HEK293 (cell line): ENCODE measurements at regions of chr2 and their contacts with region 1.

Region 1: DNA sequence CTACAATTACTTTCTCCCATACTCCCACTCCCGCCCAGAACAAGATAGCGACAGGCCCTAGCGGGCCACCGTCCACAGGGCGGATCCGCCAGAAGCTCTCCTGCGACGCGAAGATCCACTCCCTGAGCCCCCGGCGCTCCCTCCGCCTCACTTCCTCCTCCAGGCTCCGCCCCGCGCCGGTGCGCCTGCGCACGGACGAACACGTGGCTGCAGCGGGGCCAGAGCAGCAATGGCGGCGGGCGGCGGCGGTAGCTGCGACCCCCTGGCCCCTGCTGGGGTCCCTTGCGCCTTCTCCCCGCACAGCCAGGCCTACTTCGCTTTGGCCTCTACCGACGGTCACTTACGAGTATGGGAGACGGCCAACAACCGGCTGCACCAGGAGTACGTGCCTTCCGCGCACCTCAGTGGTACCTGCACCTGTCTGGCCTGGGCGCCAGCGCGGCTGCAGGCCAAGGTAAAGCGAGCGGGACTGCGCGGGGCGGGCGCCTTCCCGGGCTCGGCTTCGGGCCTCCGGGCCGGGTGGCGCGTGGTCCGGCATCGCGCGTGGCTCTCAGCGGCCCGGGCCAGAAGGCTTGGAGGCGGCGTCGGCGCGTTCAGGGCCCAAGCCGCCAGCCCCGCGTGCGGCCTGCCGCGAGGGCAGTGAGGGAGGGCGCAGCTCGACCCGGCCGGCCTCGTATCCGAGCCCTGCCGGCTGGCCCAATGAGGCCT is at the start of gene WDR43:
- H3K4me3 ChIP-seq: peak within 1 kb of the TSS; percentile 95
- H3K27ac ChIP-seq: peak within 1 kb of the TSS; percentile 92
- H3K4me1 ChIP-seq: peaks cover 21% of the 10 kb centered on the region
- CTCF ChIP-seq: no peak

Region 2: GRCh38 chr2:28544919-28545589 is 349.6 kb before region 1 on chr2:
- CTCF ChIA-PET with region 1: no interaction called
- POLR2A ChIA-PET with region 1: interaction called, 17 read pairs
- H3K4me3 ChIP-seq: no peak overlapping the region
- H3K27ac ChIP-seq: no peak overlapping the region
- H3K4me1 ChIP-seq: no peaks in the 10 kb centered on the region
- CTCF ChIP-seq: no peak

Region 3: DNA sequence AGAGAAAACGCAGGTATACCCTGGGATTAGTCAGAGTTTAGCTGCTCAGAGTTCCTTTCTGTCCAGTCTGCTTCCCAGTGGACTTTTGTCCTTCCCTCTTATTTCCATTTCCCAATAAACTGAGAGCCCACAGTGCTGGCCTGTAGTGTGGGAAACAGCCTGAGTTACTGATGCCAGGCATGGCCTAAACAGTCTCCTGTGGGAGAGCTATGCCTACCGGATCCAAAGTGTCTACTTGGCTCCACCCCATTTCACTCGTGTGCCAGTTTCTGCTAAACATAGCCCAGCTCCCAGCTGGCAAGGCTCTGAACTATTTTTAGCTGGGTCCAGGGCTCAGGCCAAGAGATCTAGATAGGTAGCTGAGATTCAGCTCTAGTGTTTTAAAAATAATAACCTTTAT is 158.6 kb before region 1 on chr2:
- CTCF ChIA-PET with region 1: no interaction called
- POLR2A ChIA-PET with region 1: no interaction called
- H3K4me3 ChIP-seq: no peak overlapping the region
- H3K27ac ChIP-seq: no peak overlapping the region
- H3K4me1 ChIP-seq: no peaks in the 10 kb centered on the region
- CTCF ChIP-seq: no peak

Region 4: GRCh38 chr2:28915939-28916338 is 21.3 kb after region 1 on chr2:
- CTCF ChIA-PET with region 1: no interaction called
- POLR2A ChIA-PET with region 1: no interaction called
- H3K4me3 ChIP-seq: no peak overlapping the region
- H3K27ac ChIP-seq: no peak overlapping the region
- H3K4me1 ChIP-seq: no peaks in the 10 kb centered on the region
- CTCF ChIP-seq: no peak